Panc1 (cell line): ENCODE measurements at regions of chr10 and their contacts with region 1.

Region 1: DNA sequence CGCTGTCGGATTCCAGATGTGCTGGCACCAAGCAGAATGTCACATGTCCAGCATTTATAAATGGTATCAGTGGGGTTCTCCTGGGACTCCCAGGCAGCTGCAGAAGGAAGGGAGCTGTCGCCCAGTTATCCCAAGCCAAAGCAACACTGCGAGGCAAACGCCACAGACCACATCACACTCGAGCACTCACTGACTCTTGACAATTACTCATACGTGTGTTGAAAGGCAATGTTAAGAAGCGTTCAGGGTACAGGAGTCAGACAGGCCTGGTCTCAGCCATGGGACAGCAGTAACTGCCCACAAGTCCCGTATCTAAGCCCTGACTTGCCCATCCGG is 113.4 kb downstream of the DIP2C start:
- DNase-seq: no peak
- ATAC-seq: no peak
- H3K4me3 ChIP-seq: no peak overlapping the region
- H3K27ac ChIP-seq: no peak overlapping the region
- H3K4me1 ChIP-seq: no peaks in the 10 kb centered on the region
- H3K27me3 ChIP-seq: no peaks in the 10 kb centered on the region
- CTCF ChIP-seq: no peak

Region 2: GRCh38 chr10:510415-510881 is 65.7 kb before region 1 on chr10:
- CTCF ChIA-PET with region 1: no interaction called
- POLR2A ChIA-PET with region 1: no interaction called
- in situ Hi-C with region 1: no loop called
- intact Hi-C with region 1: no loop called
- DNase-seq: no peak
- ATAC-seq: no peak
- H3K4me3 ChIP-seq: no peak overlapping the region
- H3K27ac ChIP-seq: no peak overlapping the region
- H3K4me1 ChIP-seq: peaks cover 14% of the 10 kb centered on the region
- H3K27me3 ChIP-seq: no peaks in the 10 kb centered on the region
- CTCF ChIP-seq: no peak

Region 3: GRCh38 chr10:677750-678661 is 101.9 kb after region 1 on chr10:
- CTCF ChIA-PET with region 1: interaction called, 11 read pairs
- POLR2A ChIA-PET with region 1: no interaction called
- in situ Hi-C with region 1: no loop called
- intact Hi-C with region 1: no loop called
- DNase-seq: no peak
- ATAC-seq: peak; percentile 43; the same call in 1 of the 2 replicates
- H3K4me3 ChIP-seq: no peak overlapping the region
- H3K27ac ChIP-seq: no peak overlapping the region
- H3K4me1 ChIP-seq: peaks cover 6% of the 10 kb centered on the region
- H3K27me3 ChIP-seq: no peaks in the 10 kb centered on the region
- CTCF ChIP-seq: no peak